Heart left ventricle (tissue), 16 donors: ENCODE measurements at regions of chr2 and their contacts with region 1.

Region 1: DNA sequence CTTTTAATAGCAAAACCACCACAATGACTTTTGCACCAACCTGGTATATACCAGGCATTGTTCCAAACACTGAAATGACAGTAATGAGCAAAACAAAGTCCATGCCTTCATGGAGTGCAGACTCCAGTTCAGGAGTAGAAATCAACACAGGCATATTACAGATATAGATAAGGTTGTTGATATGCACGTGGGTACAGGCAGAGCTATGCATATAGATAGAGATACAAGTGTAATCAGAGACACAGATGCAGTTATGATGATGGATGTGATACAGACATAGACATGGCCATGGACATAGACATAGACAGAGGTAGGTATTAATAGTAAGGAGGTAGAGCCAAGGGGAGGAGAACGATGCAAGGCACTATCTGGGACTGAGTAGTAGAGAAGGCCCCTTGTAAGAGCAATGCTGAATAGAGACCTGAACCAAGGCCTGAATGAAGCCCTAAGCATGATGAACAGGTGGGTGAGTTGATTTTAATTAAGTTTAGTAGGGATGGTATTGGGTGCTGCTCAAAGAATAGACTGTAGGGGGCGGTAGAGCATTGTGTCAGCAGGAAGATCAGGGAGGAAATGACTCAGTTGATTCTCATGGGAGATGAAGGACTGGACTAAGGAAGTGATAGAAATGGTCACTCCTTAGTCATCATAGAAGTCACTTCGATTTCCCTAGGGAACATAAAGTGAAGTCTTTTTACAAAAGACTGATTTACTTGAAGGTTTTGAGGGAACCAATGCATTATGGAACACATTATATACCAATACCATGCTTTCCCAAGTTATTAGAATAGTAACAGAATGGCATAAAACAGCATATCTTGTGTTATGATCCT is 39.4 kb downstream of the CMPK2 start:
- DNase-seq: no peak
- ATAC-seq: peak; percentile 51 to 87 (median 78)
- H3K4me3 ChIP-seq: no peak overlapping the region
- H3K27ac ChIP-seq: peak overlapping the region in 1 of 12 donors; percentile 34
- H3K4me1 ChIP-seq: peaks cover 0 to 20% (median 8%) of the 10 kb centered on the region in 12 donors
- H3K27me3 ChIP-seq: no peaks in the 10 kb centered on the region
- CTCF ChIP-seq: peak; percentile 46 to 70 (median 60)
- POLR2A ChIP-seq: no peak

Region 2: DNA sequence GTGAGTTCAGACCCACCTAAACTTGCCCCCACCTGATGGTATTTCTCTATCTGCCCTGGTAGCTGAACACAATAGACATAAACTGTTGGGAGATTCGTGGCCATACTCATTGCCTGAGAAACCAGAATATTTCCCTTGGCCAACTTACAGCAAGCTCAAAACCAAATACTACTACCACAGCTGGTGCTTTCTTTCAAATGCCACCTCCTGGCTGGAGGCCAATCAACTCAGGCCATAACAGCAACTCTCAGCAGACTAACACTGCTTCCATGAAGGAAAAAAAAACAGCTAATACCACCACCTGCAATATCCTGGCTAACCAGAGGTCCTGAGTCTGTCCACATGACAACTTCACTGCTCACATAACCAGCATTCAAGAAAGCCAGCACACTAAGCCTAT is 333.7 kb before region 1 on chr2:
- intact Hi-C with region 1: no loop called
- DNase-seq: no peak
- ATAC-seq: no peak
- H3K4me3 ChIP-seq: no peak overlapping the region
- H3K27ac ChIP-seq: no peak overlapping the region
- H3K4me1 ChIP-seq: no peaks in the 10 kb centered on the region
- H3K27me3 ChIP-seq: no peaks in the 10 kb centered on the region
- CTCF ChIP-seq: no peak
- POLR2A ChIP-seq: no peak

Region 3: GRCh38 chr2:6657855-6658254 is 168.4 kb before region 1 on chr2:
- intact Hi-C with region 1: no loop called
- DNase-seq: no peak
- ATAC-seq: no peak
- H3K4me3 ChIP-seq: no peak overlapping the region
- H3K27ac ChIP-seq: no peak overlapping the region
- H3K4me1 ChIP-seq: no peaks in the 10 kb centered on the region
- H3K27me3 ChIP-seq: peaks cover 0 to 3% (median 0%) of the 10 kb centered on the region in 9 donors
- CTCF ChIP-seq: no peak
- POLR2A ChIP-seq: no peak

Region 4: GRCh38 chr2:7044261-7045250 is 218.3 kb after region 1 on chr2:
- intact Hi-C with region 1: loop called in 1 of 10 experiments (anchors 5 kb)
- DNase-seq: peak; percentile 58 to 81 (median 70)
- ATAC-seq: peak; percentile 74 to 86 (median 84)
- H3K4me3 ChIP-seq: no peak overlapping the region
- H3K27ac ChIP-seq: peak overlapping the region in 1 of 12 donors; percentile 4
- H3K4me1 ChIP-seq: peaks cover 0 to 17% (median 2%) of the 10 kb centered on the region in 12 donors
- H3K27me3 ChIP-seq: no peaks in the 10 kb centered on the region
- CTCF ChIP-seq: peak; percentile 91 to 99 (median 98)
- POLR2A ChIP-seq: no peak